ENCODE measurements at regions of chr1 and their contacts with region 1.

Region 1: GRCh38 chr1:171485375-171486047 is at the start of gene PRRC2C:
- DNase-seq: peak; percentile 99
- H3K4me3 ChIP-seq: peak within 1 kb of the TSS; percentile 65 to 91 (median 88)
- H3K27ac ChIP-seq: peak within 1 kb of the TSS; percentile 98 to 99 (median 98)
- H3K4me1 ChIP-seq: peaks cover 0 to 38% (median 34%) of the 10 kb centered on the region in 4 donors
- H3K27me3 ChIP-seq: no peaks in the 10 kb centered on the region
- CTCF ChIP-seq: peak in 2 of 4 experiments; percentile 16 to 74
- EP300 ChIP-seq: peak in 1 of 4 donors; percentile 63
- POLR2A ChIP-seq: peak; percentile 59 to 60
- total RNA-seq, gene PRRC2C: 46.4 to 80.0 (median 53.1) TPM

Region 2: DNA sequence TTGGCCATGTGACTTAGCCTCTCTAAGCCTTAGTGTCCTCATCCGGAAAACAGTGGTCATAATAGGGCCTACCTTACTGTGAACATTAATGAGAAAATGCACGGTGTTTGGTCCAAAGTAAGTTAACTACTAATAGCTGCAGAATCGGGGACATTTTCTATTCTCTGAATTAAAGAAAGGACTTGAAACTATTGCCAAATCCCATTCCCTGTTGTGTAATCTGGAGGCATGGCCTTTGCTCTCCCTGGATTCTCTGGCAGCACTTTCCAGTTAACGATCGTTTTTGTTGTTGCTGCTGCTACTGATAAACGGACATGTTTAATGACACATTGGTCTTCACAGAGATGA is 141.1 kb before region 1 on chr1:
- intact Hi-C with region 1: no loop called
- DNase-seq: no peak
- H3K4me3 ChIP-seq: no peak overlapping the region
- H3K27ac ChIP-seq: no peak overlapping the region
- H3K4me1 ChIP-seq: no peaks in the 10 kb centered on the region
- H3K27me3 ChIP-seq: no peaks in the 10 kb centered on the region
- CTCF ChIP-seq: no peak
- EP300 ChIP-seq: no peak
- POLR2A ChIP-seq: no peak

Region 3: DNA sequence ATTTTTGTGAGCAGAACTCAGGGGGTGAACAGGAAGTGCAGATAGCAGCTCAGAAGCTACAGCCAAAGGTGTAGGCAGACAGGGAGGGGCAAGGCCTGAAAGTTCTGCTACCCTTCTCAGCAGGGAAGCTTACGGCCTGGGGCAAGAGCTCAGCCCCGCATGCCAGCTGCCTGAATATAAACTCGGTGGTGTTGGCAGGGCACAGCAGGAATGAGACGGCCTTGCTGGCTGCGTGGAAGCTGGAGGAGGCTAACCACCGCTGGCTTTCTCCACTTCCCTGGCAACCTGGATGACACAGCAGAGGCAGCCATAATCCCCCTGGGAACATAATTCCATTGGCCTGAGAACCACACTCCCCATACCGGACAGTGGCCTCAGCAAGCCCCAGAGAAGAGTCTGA is 82.1 kb before region 1 on chr1:
- intact Hi-C with region 1: no loop called
- DNase-seq: no peak
- H3K4me3 ChIP-seq: no peak overlapping the region
- H3K27ac ChIP-seq: no peak overlapping the region
- H3K4me1 ChIP-seq: no peaks in the 10 kb centered on the region
- H3K27me3 ChIP-seq: no peaks in the 10 kb centered on the region
- CTCF ChIP-seq: no peak
- EP300 ChIP-seq: no peak
- POLR2A ChIP-seq: no peak

Region 4: GRCh38 chr1:171781176-171781875 is 295.8 kb after region 1 on chr1 and contains the start of gene METTL13:
- intact Hi-C with region 1: loop called (anchors 5 kb)
- DNase-seq: peak; percentile 99
- H3K4me3 ChIP-seq: peak within 1 kb of the TSS; percentile 56 to 84 (median 74)
- H3K27ac ChIP-seq: peak within 1 kb of the TSS; percentile 84 to 90 (median 89)
- H3K4me1 ChIP-seq: peaks cover 0 to 43% (median 33%) of the 10 kb centered on the region in 4 donors
- H3K27me3 ChIP-seq: no peaks in the 10 kb centered on the region
- CTCF ChIP-seq: no peak
- EP300 ChIP-seq: no peak
- POLR2A ChIP-seq: peak; percentile 94 to 95
- total RNA-seq, gene METTL13: 8.4 to 21.8 (median 17.0) TPM

Region 5: GRCh38 chr1:172054172-172054571 is 568.7 kb after region 1 on chr1:
- intact Hi-C with region 1: no loop called
- DNase-seq: no peak
- H3K4me3 ChIP-seq: no peak overlapping the region
- H3K27ac ChIP-seq: no peak overlapping the region
- H3K4me1 ChIP-seq: no peaks in the 10 kb centered on the region
- H3K27me3 ChIP-seq: no peaks in the 10 kb centered on the region
- CTCF ChIP-seq: no peak
- EP300 ChIP-seq: no peak
- POLR2A ChIP-seq: no peak